Ascending aorta (tissue), 2 donors: ENCODE measurements at regions of chr11 and their contacts with region 1.

Region 1: DNA sequence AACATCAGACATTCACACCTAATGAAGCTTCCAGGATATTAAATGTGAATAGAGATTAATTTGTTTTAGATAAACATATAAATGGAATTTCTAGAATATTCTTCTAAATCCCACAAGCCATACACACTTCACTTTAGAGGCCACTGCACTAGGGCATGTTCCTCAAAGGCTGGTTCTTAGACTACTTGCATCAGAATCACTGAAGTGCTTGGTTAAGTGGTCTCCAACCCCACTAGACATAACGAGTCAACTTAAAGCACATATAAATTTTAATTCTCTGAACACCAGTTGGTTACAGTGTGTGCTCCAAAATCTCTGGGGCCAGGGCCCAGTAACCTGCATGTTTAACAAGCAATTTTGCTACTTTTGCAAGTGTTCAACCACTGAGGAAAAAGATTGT is 7.9 kb upstream of the ALKBH8 start:
- DNase-seq: no peak
- H3K4me3 ChIP-seq: no peak overlapping the region
- H3K27ac ChIP-seq: no peak overlapping the region
- H3K4me1 ChIP-seq: no peaks in the 10 kb centered on the region
- H3K27me3 ChIP-seq: no peaks in the 10 kb centered on the region
- CTCF ChIP-seq: no peak

Region 2: DNA sequence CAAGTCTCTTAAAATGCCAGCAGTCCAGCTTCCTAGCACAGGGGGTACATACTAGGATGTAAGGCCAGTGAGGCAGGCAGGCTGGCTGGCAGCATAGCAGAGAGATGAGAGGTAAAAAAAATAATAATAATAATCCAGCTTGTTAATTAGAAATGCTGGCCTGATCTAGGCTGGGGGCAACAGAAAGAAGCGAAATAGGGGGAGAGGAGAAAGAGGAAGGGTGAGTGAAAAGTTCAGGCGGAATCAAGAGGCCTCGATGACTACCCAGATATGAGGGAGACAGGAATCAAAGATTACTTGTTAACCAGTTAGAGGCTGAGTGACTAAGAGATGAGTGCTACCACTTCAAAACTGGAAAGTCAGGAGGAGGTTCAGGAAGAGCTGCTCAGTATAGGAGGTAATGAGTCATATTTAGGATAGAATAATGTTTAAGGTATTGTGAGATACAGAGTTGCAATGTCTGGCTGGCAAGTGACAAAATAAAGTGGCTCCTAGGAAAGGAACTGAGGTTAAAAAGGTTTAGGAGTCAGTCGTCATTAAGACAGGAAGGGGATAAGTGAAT is 10.7 kb before region 1 on chr11:
- intact Hi-C with region 1: no loop called
- DNase-seq: no peak
- H3K4me3 ChIP-seq: no peak overlapping the region
- H3K27ac ChIP-seq: no peak overlapping the region
- H3K4me1 ChIP-seq: peaks cover 5 to 7% of the 10 kb centered on the region in 2 donors
- H3K27me3 ChIP-seq: no peaks in the 10 kb centered on the region
- CTCF ChIP-seq: no peak

Region 3: GRCh38 chr11:107689317-107690202 is 116.1 kb after region 1 on chr11:
- intact Hi-C with region 1: loop called (anchors 2 kb)
- DNase-seq: peak in 1 of 2 donors; percentile 83
- H3K4me3 ChIP-seq: peak overlapping the region in 1 of 2 donors; percentile 49
- H3K27ac ChIP-seq: no peak overlapping the region
- H3K4me1 ChIP-seq: peaks cover 0 to 13% of the 10 kb centered on the region in 2 donors
- H3K27me3 ChIP-seq: no peaks in the 10 kb centered on the region
- CTCF ChIP-seq: peak; percentile 50 to 67 (median 63)

Region 4: GRCh38 chr11:107770551-107770951 is 197.1 kb after region 1 on chr11:
- intact Hi-C with region 1: loop called (anchors 5 kb)
- DNase-seq: no peak
- H3K4me3 ChIP-seq: no peak overlapping the region
- H3K27ac ChIP-seq: no peak overlapping the region
- H3K4me1 ChIP-seq: no peaks in the 10 kb centered on the region
- H3K27me3 ChIP-seq: no peaks in the 10 kb centered on the region
- CTCF ChIP-seq: no peak

Region 5: GRCh38 chr11:107898270-107898669 is 324.8 kb after region 1 on chr11:
- intact Hi-C with region 1: loop called (anchors 5 kb)
- DNase-seq: no peak
- H3K4me3 ChIP-seq: no peak overlapping the region
- H3K27ac ChIP-seq: no peak overlapping the region
- H3K4me1 ChIP-seq: no peaks in the 10 kb centered on the region
- H3K27me3 ChIP-seq: no peaks in the 10 kb centered on the region
- CTCF ChIP-seq: peak; percentile 48 to 62 (median 58)